Heart left ventricle (tissue), 16 donors: ENCODE measurements at regions of chr18 and their contacts with region 1.

Region 1: DNA sequence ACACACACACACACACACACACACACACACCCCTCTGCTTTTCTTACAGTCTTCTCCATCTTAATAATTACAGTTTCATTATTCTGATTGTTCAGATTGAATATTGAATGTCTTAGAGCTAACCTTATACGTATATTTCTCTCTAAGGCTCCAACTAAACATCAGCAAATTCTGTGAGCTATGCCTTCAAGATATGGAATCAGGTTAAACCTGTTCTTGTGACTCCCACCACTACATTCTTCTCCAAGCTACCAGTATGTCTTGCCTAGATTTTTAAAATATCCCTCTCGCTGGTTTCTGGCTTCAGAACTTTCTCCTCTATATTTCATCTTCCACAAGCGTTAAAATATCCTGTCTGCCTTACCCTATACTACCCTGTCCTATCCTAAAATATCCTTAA is 1346.4 kb upstream of the CDH2 start:
- DNase-seq: no peak
- ATAC-seq: no peak
- H3K4me3 ChIP-seq: no peak overlapping the region
- H3K27ac ChIP-seq: no peak overlapping the region
- H3K4me1 ChIP-seq: no peaks in the 10 kb centered on the region
- H3K27me3 ChIP-seq: no peaks in the 10 kb centered on the region
- CTCF ChIP-seq: no peak
- POLR2A ChIP-seq: no peak

Region 2: DNA sequence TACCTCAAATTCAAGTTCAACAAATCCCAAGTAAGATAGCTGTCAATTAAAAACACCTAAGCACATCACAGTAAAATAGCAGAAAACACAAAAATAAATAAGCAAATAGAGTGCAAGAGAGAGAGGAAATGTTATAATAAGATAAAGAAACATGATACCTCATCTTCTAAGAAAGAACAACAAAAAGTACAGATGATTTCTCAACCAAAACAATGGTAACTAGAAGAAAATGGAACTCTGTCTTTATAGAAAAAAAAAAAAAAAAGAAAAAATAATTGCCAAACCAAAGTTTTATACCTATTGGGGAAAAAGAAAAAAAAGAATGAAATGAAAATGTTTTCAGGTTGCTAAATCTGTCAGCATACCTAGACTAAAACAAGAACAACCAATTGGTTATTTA is 92.9 kb before region 1 on chr18:
- intact Hi-C with region 1: no loop called
- DNase-seq: no peak
- ATAC-seq: no peak
- H3K4me3 ChIP-seq: no peak overlapping the region
- H3K27ac ChIP-seq: no peak overlapping the region
- H3K4me1 ChIP-seq: no peaks in the 10 kb centered on the region
- H3K27me3 ChIP-seq: no peaks in the 10 kb centered on the region
- CTCF ChIP-seq: no peak
- POLR2A ChIP-seq: no peak

Region 3: GRCh38 chr18:29465526-29465925 is 57.8 kb before region 1 on chr18:
- intact Hi-C with region 1: loop called in 1 of 10 experiments (anchors 10 kb)
- DNase-seq: no peak
- ATAC-seq: no peak
- H3K4me3 ChIP-seq: no peak overlapping the region
- H3K27ac ChIP-seq: no peak overlapping the region
- H3K4me1 ChIP-seq: no peaks in the 10 kb centered on the region
- H3K27me3 ChIP-seq: no peaks in the 10 kb centered on the region
- CTCF ChIP-seq: no peak
- POLR2A ChIP-seq: no peak